ENCODE measurements at regions of chrX and their contacts with region 1.

Region 1: GRCh38 chrX:45515262-45516215 is 314.9 kb upstream of the DIPK2B start:
- DNase-seq: peak; percentile 46 to 86
- H3K4me3 ChIP-seq: peak overlapping the region; percentile 19; the same call in 1 of the 2 replicates
- H3K27ac ChIP-seq: peak overlapping the region; percentile 87
- H3K4me1 ChIP-seq: peaks cover 11% of the 10 kb centered on the region
- H3K27me3 ChIP-seq: no peaks in the 10 kb centered on the region
- CTCF ChIP-seq: peak; percentile 59

Region 2: DNA sequence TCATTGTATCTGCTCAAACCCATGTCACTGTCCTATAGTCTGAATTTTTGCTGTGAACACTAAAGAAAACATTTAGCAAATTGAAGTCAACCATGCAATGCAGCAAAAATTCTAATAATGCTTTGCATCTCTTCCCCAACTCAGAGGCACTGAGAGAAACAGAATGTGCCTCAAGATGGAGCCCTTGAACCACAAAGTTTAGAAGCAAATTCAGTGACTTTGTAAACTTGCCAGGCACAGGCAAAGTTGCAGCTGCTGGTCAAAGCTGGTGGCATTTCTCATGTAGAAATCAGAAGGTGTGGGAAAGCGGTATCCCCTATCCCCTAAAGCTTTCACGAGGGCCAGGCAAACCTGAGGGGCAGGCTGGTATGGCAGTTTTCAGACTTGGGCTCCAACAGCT is 193.2 kb before region 1 on chrX:
- CTCF ChIA-PET with region 1: no interaction called
- POLR2A ChIA-PET with region 1: no interaction called
- intact Hi-C with region 1: loop called (anchors 5 kb)
- DNase-seq: peak; percentile 14 to 52
- H3K4me3 ChIP-seq: no peak overlapping the region
- H3K27ac ChIP-seq: no peak overlapping the region
- H3K4me1 ChIP-seq: 0 out of 2 replicates have a peak, but pooled peaks cover 3% of the 10 kb centered on the region
- H3K27me3 ChIP-seq: no peaks in the 10 kb centered on the region
- CTCF ChIP-seq: peak; percentile 52; the same call in 1 of the 2 replicates

Region 3: DNA sequence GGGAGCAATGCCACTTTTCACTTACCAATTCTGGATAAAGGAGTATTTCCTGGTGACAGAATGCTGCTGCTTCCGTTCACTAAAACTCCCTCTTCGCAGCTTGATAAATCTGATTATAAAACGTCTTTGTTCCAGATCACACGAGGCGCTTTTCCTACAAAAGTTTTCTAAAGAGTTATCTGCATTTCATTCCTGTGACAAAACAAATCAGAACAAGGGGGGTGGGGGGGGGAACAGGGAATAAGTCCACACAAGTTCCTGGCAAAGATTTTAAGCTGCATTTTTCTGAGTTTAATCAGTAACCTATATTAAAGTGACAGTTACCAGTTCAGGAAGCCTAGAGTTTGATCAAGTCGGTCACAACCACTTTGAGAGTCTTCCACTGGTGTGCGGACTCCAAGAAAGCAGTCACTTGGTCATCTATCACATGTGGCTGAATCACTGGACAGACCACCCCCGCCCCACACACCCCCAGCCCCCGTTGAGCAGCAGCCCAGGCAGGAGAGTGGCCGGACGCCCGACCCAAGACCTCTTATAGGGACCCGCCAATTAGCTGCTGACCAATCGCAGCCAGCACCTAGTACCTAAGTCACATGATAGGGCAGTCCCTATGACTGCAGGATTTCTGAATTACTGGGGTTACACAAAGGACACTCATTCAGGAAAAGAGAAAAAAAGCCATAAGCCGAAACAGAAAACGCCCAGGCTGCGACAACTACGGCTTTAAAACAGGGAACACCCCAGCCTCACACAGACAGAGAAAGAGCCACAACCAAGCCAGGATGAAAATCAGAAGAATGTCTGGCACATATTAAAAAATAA is 254.4 kb after region 1 on chrX:
- CTCF ChIA-PET with region 1: no interaction called
- POLR2A ChIA-PET with region 1: no interaction called
- intact Hi-C with region 1: loop called (anchors 1 kb)
- DNase-seq: peak; percentile 54 to 73
- H3K4me3 ChIP-seq: peak overlapping the region; percentile 57
- H3K27ac ChIP-seq: peak overlapping the region; percentile 87
- H3K4me1 ChIP-seq: peaks cover 26% of the 10 kb centered on the region
- H3K27me3 ChIP-seq: no peaks in the 10 kb centered on the region
- CTCF ChIP-seq: no peak

Region 4: DNA sequence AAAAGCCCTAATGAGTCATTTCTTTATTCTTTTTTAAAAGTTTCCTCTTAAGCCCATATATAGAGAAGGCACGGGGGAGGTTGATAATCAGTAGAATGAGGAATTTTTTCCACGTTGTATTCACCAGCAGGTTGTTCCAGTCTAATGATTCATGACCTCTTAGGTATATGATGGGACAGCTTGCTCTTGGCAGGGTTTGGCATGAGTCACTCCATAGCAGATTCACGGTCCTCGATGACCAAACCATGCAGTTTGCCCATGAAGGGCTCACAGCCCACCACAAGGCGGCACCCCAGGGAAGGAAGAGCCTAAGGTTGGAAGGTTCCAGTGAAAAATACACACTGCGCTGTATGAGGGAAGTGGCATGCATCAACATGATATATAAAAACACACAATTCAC is 308.9 kb after region 1 on chrX:
- CTCF ChIA-PET with region 1: no interaction called
- POLR2A ChIA-PET with region 1: no interaction called
- intact Hi-C with region 1: loop called (anchors 5 kb)
- DNase-seq: peak; percentile 72 to 87
- H3K4me3 ChIP-seq: no peak overlapping the region
- H3K27ac ChIP-seq: peak overlapping the region; percentile 64
- H3K4me1 ChIP-seq: peaks cover 13% of the 10 kb centered on the region; the same call in 1 of the 2 replicates
- H3K27me3 ChIP-seq: no peaks in the 10 kb centered on the region
- CTCF ChIP-seq: peak; percentile 57

Region 5: GRCh38 chrX:46260513-46260912 is 745.0 kb after region 1 on chrX:
- CTCF ChIA-PET with region 1: interaction called, 4 read pairs
- POLR2A ChIA-PET with region 1: no interaction called
- intact Hi-C with region 1: loop called (anchors 5 kb)
- DNase-seq: peak; percentile 65 to 89
- H3K4me3 ChIP-seq: no peak overlapping the region
- H3K27ac ChIP-seq: peak overlapping the region; percentile 99
- H3K4me1 ChIP-seq: peaks cover 40% of the 10 kb centered on the region
- H3K27me3 ChIP-seq: no peaks in the 10 kb centered on the region
- CTCF ChIP-seq: no peak

Region 6: DNA sequence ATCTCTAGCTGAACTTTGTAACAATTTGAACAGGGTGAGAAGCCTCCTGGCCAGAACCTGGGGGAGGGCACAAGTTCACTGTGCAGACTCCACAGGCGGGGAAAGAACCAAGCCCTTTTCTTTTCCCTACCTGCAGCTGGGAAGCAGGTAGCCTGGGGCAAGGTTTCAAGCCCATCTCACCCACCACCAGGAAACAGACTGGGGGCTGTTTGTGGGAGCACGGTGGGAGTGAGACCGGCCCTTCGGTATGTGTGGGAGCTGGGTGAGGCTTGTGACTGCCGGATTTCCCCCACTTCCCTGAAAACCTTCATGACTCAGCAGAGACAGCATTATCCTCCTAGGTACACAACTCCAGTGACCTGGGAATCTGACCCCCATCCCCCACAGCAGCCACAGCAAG is 818.0 kb after region 1 on chrX:
- CTCF ChIA-PET with region 1: no interaction called
- POLR2A ChIA-PET with region 1: no interaction called
- intact Hi-C with region 1: loop called (anchors 2 kb)
- DNase-seq: peak; percentile 53 to 88
- H3K4me3 ChIP-seq: peak overlapping the region; percentile 52; the same call in 1 of the 2 replicates
- H3K27ac ChIP-seq: peak overlapping the region; percentile 100
- H3K4me1 ChIP-seq: peaks cover 32% of the 10 kb centered on the region
- H3K27me3 ChIP-seq: no peaks in the 10 kb centered on the region
- CTCF ChIP-seq: no peak

Region 7: DNA sequence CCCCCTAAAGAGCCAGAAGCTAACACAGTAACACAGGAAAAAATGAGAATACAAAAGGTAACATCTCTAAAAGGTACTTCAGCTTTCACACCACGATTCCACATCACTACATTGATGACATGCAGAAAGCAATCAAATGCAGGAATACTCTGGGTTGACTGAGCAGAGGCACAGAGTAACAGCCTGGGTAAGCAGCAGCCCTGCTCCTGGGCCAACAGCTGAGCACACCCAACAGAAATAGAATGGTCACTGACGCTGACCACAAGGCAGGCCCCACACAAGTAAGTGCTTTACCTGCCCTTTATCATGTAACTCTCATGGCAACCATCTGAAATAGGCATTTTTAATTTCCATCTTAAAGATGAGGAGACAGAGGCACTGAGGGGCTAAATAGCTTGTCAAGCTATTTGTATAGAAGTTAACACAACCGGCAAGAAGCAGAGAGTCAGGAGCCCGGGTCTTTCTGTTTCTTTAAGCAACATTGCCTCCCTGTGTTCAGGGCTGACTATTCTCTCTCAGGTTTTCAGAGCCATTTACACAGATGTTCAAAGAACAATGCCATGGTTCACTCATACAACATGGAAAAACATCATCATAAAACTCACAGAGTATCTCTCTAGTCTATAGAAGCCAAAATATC is 860.8 kb after region 1 on chrX:
- CTCF ChIA-PET with region 1: no interaction called
- POLR2A ChIA-PET with region 1: no interaction called
- intact Hi-C with region 1: loop called (anchors 2 kb)
- DNase-seq: peak; percentile 26 to 48
- H3K4me3 ChIP-seq: 0 out of 2 replicates have a peak overlapping the region, but pooled peaks have one; percentile 5
- H3K27ac ChIP-seq: peak overlapping the region; percentile 94
- H3K4me1 ChIP-seq: peaks cover 25% of the 10 kb centered on the region
- H3K27me3 ChIP-seq: no peaks in the 10 kb centered on the region
- CTCF ChIP-seq: peak; percentile 46; the same call in 1 of the 2 replicates